Mammary epithelial cell (primary cell): ENCODE measurements at regions of chr2 and their contacts with region 1.

Region 1: DNA sequence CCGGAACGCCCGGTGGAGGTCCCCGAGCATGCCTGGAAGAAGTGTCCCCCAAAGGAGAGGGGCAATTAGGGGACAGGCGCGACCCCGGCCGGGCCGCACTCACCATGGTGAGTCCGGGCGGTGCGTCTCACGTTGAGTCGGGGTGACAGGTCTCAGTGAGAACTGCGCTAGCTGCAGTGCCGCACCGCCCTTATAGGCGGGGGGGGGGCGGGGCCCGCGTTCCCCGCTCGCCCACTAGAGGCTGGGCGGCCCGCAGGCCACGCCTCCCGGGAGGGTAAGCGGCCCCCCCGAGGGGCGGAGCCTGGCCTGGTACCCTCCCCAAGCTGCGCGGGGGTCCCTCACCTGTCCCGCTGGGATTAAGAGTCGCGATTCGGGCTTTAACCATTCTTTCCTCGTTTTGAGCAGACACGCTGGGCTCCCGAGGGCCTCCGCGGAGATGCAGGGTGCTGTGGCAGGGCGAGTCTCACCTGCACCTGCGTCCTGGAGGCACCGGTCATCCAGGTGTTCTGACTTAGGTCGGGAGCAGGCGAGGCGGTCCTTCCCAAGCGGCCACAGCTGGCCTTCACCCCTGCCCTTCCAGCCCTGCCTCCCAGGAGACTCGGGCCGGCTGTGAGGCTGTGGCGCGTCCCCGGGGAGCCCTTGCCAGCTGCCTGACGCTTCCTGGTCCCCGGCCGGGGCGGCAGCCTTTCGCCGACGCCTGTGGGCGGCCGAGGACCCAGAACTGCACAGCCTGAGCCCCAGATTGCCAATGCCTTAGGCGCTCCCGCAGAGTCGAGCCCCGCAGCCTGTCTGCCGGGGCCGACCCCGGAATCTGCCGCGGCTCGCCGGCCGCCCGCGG is at the start of gene TUBA4A:
- DNase-seq: peak; percentile 83
- H3K4me3 ChIP-seq: peak within 1 kb of the TSS; percentile 69 to 82 (median 81)
- H3K27ac ChIP-seq: peak within 1 kb of the TSS; percentile 76
- H3K4me1 ChIP-seq: peaks cover 48% of the 10 kb centered on the region
- H3K27me3 ChIP-seq: no peaks in the 10 kb centered on the region
- CTCF ChIP-seq: peak in 1 of 2 donors; percentile 12
- total RNA-seq, gene TUBA4A: 206 to 209 TPM

Region 2: GRCh38 chr2:219218732-219219701 is 35.0 kb before region 1 on chr2 and contains the start of gene ABCB6:
- CTCF ChIA-PET with region 1: no interaction called
- dilution Hi-C with region 1: no loop called
- in situ Hi-C with region 1: no loop called
- intact Hi-C with region 1: loop called (anchors 2 kb)
- DNase-seq: peak; percentile 57
- H3K4me3 ChIP-seq: peak within 1 kb of the TSS; percentile 12 to 54 (median 48)
- H3K27ac ChIP-seq: peak within 1 kb of the TSS; percentile 18
- H3K4me1 ChIP-seq: peaks cover 21% of the 10 kb centered on the region
- H3K27me3 ChIP-seq: no peaks in the 10 kb centered on the region
- CTCF ChIP-seq: no peak
- total RNA-seq, gene ABCB6: 9.6 to 15.7 TPM